ENCODE measurements at regions of chr2 and their contacts with region 1.

Region 1: DNA sequence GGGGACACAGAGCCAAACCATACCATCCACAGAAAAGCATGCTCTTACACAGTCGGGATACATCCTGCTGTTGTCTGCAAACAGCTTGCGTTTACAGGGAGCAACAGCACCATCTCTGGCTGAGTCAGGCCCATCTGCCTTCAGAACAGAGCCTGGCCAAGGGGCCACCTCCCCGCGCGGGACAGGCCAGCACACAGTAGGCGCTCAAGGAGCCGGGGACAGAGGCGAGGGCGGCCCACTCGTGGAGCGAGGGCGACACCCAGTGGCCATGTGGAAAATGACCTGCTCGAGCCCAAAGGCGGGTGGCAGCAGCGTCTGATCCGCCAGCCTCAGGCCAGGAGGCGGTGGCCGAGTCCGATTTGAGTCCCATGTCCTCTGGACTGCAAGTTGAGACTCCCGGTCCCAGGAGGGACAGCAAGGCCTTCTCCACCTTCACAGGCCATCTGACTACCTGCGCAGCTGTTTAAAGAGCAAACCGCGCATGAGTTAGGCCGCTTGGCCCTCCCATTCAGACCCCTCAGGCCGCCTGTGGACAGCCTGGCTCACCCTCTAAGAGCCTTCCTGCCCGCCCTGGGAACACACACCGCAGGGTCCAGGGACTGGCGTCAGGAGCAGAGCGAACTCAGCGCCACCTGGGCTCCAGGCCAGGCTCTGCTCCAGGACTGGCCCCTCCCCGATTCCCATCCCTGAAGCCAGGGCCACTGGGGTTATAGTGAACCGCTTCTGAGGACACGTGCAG is 38.3 kb downstream of the TTC32 start:
- DNase-seq: peak; percentile 58 to 76
- ATAC-seq: peak; percentile 75 to 89 (median 88)
- H3K4me3 ChIP-seq: peak overlapping the region in 6 of 10 donors; percentile 10 to 40 (median 26)
- H3K27ac ChIP-seq: peak overlapping the region in 3 of 10 donors; percentile 7 to 59 (median 10)
- H3K4me1 ChIP-seq: peaks cover 0 to 13% (median 8%) of the 10 kb centered on the region in 9 donors
- H3K27me3 ChIP-seq: peaks cover 0 to 4% (median 0%) of the 10 kb centered on the region in 7 donors
- CTCF ChIP-seq: peak; percentile 93 to 100 (median 95)

Region 2: DNA sequence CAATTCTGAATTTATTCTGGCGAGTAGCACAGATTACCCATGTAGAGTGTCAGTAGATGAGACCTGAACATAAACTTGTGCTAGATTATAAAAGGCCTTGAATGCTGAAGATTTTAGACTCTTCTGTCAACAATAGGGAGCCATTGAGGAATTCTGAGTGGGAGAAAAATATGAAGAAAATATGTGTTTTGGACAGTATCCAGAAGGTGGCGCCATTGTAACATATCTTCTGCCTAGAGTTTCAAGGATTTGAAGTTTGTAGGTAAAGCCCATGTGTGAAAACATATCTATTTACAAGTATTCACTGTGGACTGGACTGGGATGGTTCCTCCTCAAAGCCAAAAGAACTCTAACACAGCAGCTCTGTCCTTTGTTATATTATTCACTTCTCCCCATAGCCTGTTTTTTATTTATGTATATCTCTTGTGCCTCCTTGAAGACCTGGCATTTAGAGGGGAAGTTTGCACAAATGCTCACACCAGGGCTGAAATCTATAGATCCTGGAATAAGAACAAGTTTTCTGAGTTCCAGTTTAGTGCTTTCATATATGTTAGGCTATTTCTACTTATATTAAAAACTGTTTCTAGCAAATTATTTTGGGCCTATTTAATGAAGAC is 1427.9 kb before region 1 on chr2:
- intact Hi-C with region 1: loop called in 3 of 10 experiments (anchors 2 to 10 kb)
- DNase-seq: peak in 1 of 2 donors; percentile 35
- ATAC-seq: peak in 3 of 8 donors; percentile 27 to 57 (median 49)
- H3K4me3 ChIP-seq: no peak overlapping the region
- H3K27ac ChIP-seq: no peak overlapping the region
- H3K4me1 ChIP-seq: peaks cover 0 to 13% (median 4%) of the 10 kb centered on the region in 9 donors
- H3K27me3 ChIP-seq: no peaks in the 10 kb centered on the region
- CTCF ChIP-seq: peak; percentile 21 to 65 (median 59)

Region 3: GRCh38 chr2:18749912-18750526 is 1113.5 kb before region 1 on chr2:
- intact Hi-C with region 1: loop called (anchors 2 to 10 kb)
- DNase-seq: peak in 1 of 2 donors; percentile 67
- ATAC-seq: peak in 2 of 8 donors; percentile 37 to 38
- H3K4me3 ChIP-seq: no peak overlapping the region
- H3K27ac ChIP-seq: no peak overlapping the region
- H3K4me1 ChIP-seq: peaks cover 0 to 15% (median 0%) of the 10 kb centered on the region in 9 donors
- H3K27me3 ChIP-seq: no peaks in the 10 kb centered on the region
- CTCF ChIP-seq: peak; percentile 55 to 87 (median 80)

Region 4: DNA sequence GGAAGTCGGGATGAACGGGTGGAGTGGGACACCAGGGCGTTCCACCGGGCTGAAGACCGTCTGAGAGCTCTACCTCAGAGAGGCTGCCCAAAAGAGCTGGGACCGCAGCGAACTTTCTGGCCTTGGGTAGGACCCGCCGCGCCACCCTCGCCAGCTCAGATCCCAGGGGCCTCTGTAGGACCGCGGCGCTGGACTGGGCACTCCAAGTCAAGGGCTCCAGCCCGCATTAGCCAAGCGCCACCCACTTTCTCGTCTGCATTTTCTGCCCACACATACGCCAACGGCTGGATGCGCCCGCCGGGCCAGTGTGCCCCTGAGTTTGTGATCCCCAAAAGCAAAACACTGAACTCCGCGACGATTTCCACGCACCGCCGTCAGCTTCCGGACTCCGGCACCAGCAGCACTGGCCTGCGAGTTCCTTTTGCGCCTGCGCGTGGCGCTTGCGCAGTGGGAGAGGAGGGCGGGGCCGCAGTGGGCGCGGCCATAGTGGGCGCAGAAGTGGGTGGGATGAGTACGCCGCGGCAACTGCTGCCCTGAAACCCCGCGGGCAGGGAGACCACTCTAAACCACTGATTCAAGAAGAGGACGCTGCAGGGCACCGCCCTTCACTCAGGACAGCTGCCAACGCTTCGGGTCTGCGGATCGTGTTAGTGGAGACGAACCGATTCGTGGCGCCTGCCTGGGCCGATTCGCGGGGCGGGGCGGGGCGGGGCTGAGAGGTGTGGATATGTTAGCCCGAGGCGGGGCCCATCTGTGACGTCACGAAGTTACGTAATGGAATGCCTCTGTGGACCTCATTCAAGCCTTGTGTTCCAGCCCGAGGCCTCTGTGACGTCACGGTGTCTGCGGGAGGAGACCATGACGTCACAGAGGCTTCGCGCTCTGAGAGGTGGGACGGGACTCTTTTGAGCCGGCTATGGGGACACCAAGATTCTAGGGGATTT is 515.6 kb before region 1 on chr2:
- intact Hi-C with region 1: loop called in 3 of 10 experiments (anchors 2 to 10 kb)
- DNase-seq: peak; percentile 93 to 94
- ATAC-seq: peak; percentile 94 to 99 (median 98)
- H3K4me3 ChIP-seq: peak overlapping the region; percentile 62 to 97 (median 78)
- H3K27ac ChIP-seq: peak overlapping the region; percentile 79 to 97 (median 94)
- H3K4me1 ChIP-seq: peaks cover 3 to 36% (median 29%) of the 10 kb centered on the region in 9 donors
- H3K27me3 ChIP-seq: peaks cover 0 to 36% (median 24%) of the 10 kb centered on the region in 7 donors
- CTCF ChIP-seq: no peak

Region 5: GRCh38 chr2:19377717-19378116 is 485.8 kb before region 1 on chr2:
- intact Hi-C with region 1: loop called in 1 of 10 experiments (anchors 10 kb)
- DNase-seq: no peak
- ATAC-seq: no peak
- H3K4me3 ChIP-seq: no peak overlapping the region
- H3K27ac ChIP-seq: no peak overlapping the region
- H3K4me1 ChIP-seq: no peaks in the 10 kb centered on the region
- H3K27me3 ChIP-seq: peaks cover 0 to 6% (median 0%) of the 10 kb centered on the region in 7 donors
- CTCF ChIP-seq: no peak

Region 6: DNA sequence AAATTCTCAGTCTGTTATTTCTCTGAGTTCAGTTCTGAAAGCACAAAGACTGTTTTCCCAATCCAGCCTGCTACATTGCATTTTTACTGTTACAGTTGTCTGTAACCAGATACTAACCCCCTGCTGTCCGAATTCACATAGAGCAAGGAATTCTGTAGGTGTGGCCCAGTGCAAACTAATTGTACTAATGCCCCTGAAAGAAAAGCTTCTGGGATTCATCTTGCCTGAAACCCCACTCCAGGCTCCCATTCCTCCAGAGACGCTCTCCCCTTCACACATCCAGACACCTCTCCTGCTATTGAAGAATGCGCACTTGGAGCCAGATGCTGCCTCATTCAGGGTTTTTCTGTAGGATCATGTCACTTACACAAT is 88.7 kb before region 1 on chr2:
- intact Hi-C with region 1: loop called in 2 of 10 experiments (anchors 10 kb)
- DNase-seq: no peak
- ATAC-seq: no peak
- H3K4me3 ChIP-seq: no peak overlapping the region
- H3K27ac ChIP-seq: no peak overlapping the region
- H3K4me1 ChIP-seq: peaks cover 0 to 33% (median 6%) of the 10 kb centered on the region in 9 donors
- H3K27me3 ChIP-seq: no peaks in the 10 kb centered on the region
- CTCF ChIP-seq: no peak

Region 7: DNA sequence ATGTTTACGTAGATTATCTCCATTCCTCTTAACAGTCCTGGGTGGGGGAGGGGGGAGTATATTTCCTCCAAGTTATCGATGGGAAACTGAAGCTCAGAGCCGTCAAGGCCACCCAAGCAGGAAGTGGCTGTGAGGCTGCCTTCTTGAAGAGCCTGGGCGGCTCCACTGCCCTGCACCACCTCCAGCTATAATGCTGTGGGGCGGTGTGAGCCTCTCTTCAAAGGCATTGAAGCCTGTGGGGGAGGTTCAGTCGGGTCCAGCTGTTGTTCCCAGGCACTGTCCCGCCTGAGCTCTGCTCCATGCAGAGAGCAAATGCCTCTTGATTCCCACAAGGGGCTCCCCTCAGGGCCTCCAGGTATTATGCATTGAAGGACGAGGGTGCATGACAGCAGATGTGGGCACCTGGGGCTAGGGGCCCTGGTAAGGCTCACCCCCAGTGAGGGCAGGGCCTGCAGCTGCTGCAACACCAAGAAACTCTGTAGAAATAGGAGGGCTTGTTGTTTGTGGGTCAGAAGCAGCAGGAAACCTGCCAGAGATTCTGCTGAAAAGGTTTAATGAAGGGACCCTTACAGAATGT is 217.5 kb after region 1 on chr2:
- intact Hi-C with region 1: no loop called
- DNase-seq: no peak
- ATAC-seq: peak in 1 of 8 donors; percentile 26
- H3K4me3 ChIP-seq: no peak overlapping the region
- H3K27ac ChIP-seq: no peak overlapping the region
- H3K4me1 ChIP-seq: no peaks in the 10 kb centered on the region
- H3K27me3 ChIP-seq: no peaks in the 10 kb centered on the region
- CTCF ChIP-seq: no peak

Region 8: DNA sequence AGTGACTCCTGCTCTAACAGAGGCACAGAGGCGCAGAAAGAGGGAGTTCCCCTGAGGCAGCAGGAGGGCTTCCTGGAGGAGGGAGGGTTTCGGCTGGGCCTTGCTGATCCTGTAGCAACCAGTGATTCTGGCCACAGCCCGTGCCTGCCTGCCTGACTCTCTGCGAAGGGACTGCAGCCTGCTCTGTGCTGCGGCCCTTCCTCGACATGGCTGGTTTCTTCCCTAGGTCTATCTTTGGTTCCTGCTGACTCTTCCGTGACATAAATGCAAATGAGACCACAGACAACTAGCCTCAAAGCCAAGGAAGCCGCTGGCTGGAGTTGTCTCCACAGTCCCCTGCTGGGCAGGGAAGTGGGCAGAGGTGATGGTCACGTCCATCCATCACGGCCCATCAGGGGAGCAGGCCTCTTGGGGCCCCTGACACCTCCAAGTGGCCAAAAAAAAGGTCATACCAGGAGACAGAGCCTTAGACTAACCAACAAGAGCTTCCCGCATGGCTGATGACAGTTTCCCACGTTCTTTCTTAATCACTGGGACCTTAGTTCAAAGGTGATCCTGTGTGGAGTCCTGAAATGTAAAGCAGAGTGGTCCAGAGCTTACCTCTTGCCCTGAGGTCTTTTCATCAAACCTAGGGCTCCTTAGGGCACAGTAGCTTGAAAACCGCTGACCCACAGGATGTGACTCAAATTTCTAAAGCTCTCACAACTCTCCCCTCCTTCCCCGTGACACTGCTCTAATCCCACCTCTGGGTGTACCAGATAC is 732.1 kb after region 1 on chr2:
- intact Hi-C with region 1: no loop called
- DNase-seq: peak in 1 of 2 donors; percentile 17
- ATAC-seq: peak in 1 of 8 donors; percentile 18
- H3K4me3 ChIP-seq: no peak overlapping the region
- H3K27ac ChIP-seq: peak overlapping the region; percentile 68 to 88 (median 83)
- H3K4me1 ChIP-seq: peaks cover 44 to 94% (median 76%) of the 10 kb centered on the region in 9 donors
- H3K27me3 ChIP-seq: no peaks in the 10 kb centered on the region
- CTCF ChIP-seq: no peak

Measured in heart right ventricle (tissue), 16 donors.